ENCODE measurements at regions of chr4 and their contacts with region 1.

Region 1: DNA sequence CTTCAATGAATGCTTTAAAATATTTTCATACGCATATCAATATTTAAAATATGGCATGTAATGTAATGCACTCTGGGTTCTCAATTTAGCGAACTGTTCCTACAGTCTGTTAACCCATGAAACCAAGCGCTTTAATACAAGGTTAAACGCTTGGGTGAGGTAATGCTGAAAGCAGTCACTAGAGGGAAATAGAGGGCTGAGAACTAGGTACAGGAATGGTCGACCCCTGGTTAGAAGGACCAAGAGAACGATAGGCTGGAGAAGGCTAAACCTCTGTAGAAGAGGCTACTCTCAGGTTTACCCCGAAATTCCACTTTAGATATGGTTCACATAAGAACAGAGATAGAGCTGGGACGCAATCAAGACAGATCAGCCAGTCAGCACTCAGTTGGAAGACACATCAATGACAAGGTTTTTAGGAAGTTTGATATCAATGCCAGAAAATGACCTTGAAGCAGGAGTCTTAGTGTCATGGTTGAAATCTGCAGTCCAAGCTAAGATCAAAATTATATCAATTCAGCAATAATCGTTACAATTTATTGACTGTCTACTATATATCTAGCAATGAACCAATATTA is 26.9 kb downstream of the ARSJ start:
- DNase-seq: peak; percentile 27
- H3K4me3 ChIP-seq: no peak overlapping the region
- H3K27ac ChIP-seq: no peak overlapping the region
- H3K4me1 ChIP-seq: no peaks in the 10 kb centered on the region
- H3K27me3 ChIP-seq: no peaks in the 10 kb centered on the region
- CTCF ChIP-seq: peak; percentile 69 to 75

Region 2: DNA sequence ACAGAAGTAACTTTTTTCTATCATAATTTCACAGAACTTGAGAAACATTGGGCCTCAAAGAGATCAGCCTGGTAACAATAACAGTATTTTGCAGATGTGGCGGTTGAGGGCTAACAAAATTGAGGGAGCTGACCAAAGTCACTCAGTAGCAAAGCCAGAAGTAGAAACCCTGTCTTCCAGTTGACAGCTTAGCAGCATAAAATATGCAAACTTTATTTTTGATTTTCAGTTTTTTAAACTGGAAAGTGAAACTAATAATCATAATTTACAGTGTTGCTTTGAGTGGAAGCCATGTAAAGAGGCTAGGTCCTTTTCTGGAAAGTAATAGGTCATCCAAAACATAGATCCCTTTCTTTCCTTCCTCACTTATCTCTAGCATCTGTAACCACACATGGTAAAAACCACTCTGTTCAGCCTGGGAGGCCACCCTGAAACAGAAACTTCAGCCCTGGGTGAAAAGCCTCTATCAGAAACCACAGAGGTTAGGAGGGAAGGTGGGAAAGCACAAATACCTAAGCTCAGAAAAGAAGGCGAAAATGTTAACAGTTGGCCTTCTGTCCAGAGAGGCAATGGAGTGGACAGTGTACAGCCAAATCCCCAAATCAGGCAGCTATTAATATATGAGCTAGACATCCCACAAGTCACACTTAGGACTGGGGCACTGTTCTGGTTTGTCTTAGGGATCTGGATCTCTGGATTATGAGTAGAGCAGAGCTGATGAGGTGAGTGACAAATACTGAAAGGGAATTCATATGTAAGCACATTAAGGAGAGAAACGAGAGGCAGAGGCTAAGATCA is 88.0 kb after region 1 on chr4:
- CTCF ChIA-PET with region 1: no interaction called
- dilution Hi-C with region 1: no loop called
- in situ Hi-C with region 1: no loop called
- intact Hi-C with region 1: no loop called
- DNase-seq: peak; percentile 84
- H3K4me3 ChIP-seq: no peak overlapping the region
- H3K27ac ChIP-seq: no peak overlapping the region
- H3K4me1 ChIP-seq: no peaks in the 10 kb centered on the region
- H3K27me3 ChIP-seq: no peaks in the 10 kb centered on the region
- CTCF ChIP-seq: no peak

Region 3: GRCh38 chr4:114057746-114058145 is 105.2 kb after region 1 on chr4:
- CTCF ChIA-PET with region 1: no interaction called
- dilution Hi-C with region 1: no loop called
- in situ Hi-C with region 1: no loop called
- intact Hi-C with region 1: loop called (anchors 1 kb)
- DNase-seq: peak; percentile 62
- H3K4me3 ChIP-seq: peak overlapping the region in 1 of 3 experiments; percentile 5
- H3K27ac ChIP-seq: peak overlapping the region; percentile 59
- H3K4me1 ChIP-seq: peaks cover 11% of the 10 kb centered on the region
- H3K27me3 ChIP-seq: no peaks in the 10 kb centered on the region
- CTCF ChIP-seq: no peak

Region 4: DNA sequence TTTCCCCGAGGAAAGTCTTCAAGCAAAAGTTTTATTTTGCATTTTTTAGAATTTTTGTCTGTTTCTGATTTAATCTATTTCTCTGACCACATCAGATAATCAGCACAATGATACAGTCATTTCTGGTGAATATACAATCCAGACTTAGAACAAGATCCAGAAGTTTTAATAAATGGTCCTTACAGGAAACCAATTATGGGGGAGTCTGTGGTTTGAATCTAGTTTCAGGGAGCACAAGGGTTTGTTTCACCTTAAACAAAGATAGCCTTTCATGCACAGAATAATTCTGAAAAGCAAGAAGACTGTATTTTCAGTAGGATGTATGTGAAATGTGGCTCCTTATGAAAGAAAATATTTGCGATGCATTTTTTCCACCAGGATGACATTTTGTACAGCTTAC is 185.4 kb after region 1 on chr4:
- CTCF ChIA-PET with region 1: no interaction called
- dilution Hi-C with region 1: no loop called
- in situ Hi-C with region 1: no loop called
- intact Hi-C with region 1: no loop called
- DNase-seq: no peak
- H3K4me3 ChIP-seq: no peak overlapping the region
- H3K27ac ChIP-seq: no peak overlapping the region
- H3K4me1 ChIP-seq: no peaks in the 10 kb centered on the region
- H3K27me3 ChIP-seq: no peaks in the 10 kb centered on the region
- CTCF ChIP-seq: no peak

Region 5: DNA sequence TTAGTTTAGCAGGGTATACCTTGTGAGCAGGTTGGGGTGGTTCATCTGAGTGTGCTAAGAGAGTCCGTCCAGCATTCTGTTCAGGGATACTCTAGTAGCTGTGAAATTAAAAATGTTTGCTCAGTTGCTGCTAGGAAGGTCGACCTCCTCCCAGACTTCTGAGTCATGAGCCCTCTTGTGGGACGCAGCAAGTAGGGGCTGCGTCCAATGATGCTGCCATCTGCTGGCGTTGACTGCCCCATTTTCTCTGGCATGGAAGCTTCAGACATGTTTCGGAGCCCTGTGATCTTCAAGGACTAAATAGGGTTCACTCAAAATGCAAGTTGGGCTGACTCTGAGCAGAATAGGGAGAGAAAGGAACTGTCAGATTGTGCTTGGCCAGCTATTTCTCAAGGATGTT is 227.9 kb after region 1 on chr4:
- CTCF ChIA-PET with region 1: no interaction called
- dilution Hi-C with region 1: no loop called
- in situ Hi-C with region 1: no loop called
- intact Hi-C with region 1: loop called (anchors 1 kb)
- DNase-seq: no peak
- H3K4me3 ChIP-seq: no peak overlapping the region
- H3K27ac ChIP-seq: no peak overlapping the region
- H3K4me1 ChIP-seq: no peaks in the 10 kb centered on the region
- H3K27me3 ChIP-seq: no peaks in the 10 kb centered on the region
- CTCF ChIP-seq: peak; percentile 15 to 46